ENCODE measurements at regions of chr1 and their contacts with region 1.

Region 1: DNA sequence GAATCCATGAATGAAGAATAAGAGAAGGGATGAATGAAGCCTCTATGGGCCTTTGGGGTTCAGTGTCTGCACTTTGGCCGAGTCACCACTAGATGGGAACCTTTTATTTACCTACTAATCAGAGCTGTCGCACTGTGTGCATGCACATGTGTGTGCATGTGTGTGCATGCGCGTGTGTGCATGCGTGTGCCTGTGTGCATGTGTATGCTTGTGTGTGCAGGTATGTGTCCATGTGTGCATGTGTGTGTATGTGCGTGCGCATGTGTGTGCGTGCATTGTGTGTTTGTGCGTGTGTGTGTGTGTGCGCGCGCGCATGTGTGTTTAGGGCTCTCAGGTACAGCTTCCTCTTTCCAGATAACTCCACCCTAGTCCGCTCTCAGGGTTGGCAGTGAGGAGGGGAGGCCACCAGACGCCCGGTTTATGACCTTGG is 20.4 kb upstream of the UBXN10 start:
- DNase-seq: no peak
- ATAC-seq: peak; percentile 20 to 62 (median 40)
- H3K4me3 ChIP-seq: no peak overlapping the region
- H3K27ac ChIP-seq: no peak overlapping the region
- H3K4me1 ChIP-seq: no peaks in the 10 kb centered on the region
- H3K27me3 ChIP-seq: no peaks in the 10 kb centered on the region
- CTCF ChIP-seq: peak; percentile 29 to 43 (median 36)
- POLR2A ChIP-seq: no peak

Region 2: DNA sequence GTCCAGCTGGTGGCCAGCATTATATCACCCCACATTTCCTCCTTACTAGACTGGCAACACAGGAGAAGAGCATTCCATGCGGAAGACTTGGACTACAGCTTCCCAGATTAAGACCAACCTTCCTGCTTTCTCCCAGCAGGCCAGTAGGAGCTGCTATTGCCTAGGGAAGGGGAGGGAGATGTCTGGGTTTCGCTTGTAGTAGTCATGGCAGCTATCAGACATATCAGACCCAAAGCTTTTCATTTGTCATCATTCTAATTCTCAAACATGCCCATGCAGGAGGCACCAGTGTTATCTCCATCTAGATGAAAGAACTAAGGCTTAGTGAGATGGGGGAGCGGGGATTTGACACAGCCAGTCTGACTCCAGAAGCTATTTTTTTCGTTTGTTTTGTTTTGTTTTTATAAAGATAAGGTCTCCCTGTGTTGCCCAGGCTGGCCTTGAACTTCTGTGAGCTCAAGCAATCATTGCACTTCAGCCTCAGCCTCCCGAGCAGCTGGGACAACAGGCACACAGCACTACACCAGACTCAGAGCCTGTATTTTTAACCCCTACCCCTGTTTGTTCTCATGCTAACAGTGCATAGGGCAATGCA is 190.6 kb before region 1 on chr1:
- intact Hi-C with region 1: loop called in 1 of 2 experiments (anchors 10 kb)
- DNase-seq: peak; percentile 51 to 67 (median 55)
- ATAC-seq: peak; percentile 47 to 81 (median 68)
- H3K4me3 ChIP-seq: no peak overlapping the region
- H3K27ac ChIP-seq: peak overlapping the region in 1 of 3 donors; percentile 71
- H3K4me1 ChIP-seq: peaks cover 0 to 35% (median 3%) of the 10 kb centered on the region in 4 donors
- H3K27me3 ChIP-seq: no peaks in the 10 kb centered on the region
- CTCF ChIP-seq: peak; percentile 72 to 88 (median 82)
- POLR2A ChIP-seq: no peak

Region 3: DNA sequence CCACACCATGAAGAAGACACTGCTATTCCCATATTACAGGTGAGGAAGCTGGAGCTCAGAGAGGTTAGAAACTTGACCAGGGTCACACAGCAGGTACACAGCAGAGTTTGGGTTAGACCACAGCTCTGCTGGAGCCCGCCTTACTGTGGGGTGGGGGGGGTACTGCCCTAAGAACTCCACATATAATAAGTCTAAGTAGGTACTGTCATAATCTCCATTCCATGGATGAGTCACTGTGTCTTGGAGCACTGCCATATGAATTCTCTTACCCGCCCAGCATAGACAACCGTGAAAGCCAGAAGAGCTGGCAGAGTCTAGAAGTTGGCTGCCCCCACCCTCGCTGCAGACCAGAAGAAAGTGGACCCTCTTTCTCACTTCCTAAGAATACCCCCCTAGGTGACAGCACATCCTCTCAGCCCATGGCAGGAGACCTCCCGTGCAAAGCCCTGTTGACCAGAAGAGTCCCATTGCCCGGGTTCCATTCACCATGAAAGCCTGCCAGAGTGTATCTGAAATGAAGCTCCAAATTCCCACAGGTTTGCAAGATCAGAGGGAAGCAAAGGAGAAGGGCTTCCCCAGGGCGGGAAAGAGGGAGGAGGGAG is 41.0 kb before region 1 on chr1:
- intact Hi-C with region 1: no loop called
- DNase-seq: no peak
- ATAC-seq: peak in 3 of 4 donors; percentile 25 to 75 (median 46)
- H3K4me3 ChIP-seq: no peak overlapping the region
- H3K27ac ChIP-seq: no peak overlapping the region
- H3K4me1 ChIP-seq: no peaks in the 10 kb centered on the region
- H3K27me3 ChIP-seq: no peaks in the 10 kb centered on the region
- CTCF ChIP-seq: no peak
- POLR2A ChIP-seq: no peak

Measured in right lobe of liver (tissue), 6 donors.